AG04450 (cell line): ENCODE measurements at regions of chr14 and their contacts with region 1.

Region 1: DNA sequence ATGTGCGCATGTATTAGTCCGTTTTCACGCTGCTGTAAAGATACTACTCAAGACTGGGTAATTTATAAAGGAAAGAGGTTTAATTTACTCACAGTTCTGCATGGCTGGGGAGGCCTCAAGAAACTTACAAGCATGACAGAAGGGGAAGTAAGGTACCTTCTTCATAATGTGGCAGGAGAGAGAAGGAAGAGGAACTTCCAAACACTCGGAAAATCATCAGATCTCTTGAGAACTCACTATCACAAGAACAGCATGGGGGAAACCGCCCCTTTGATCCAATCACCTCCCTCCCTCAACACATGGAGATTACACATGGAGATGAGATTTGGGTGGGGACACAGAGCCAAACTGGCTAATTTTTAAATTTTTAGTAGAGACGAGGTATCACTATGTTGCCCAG is 41.8 kb upstream of the SNX6 start:
- DNase-seq: no peak
- H3K4me3 ChIP-seq: no peak overlapping the region
- H3K27ac ChIP-seq: no peak overlapping the region
- H3K27me3 ChIP-seq: no peaks in the 10 kb centered on the region
- CTCF ChIP-seq: no peak

Region 2: GRCh38 chr14:34482468-34482867 is 189.2 kb before region 1 on chr14:
- CTCF ChIA-PET with region 1: no interaction called
- POLR2A ChIA-PET with region 1: no interaction called
- DNase-seq: no peak
- H3K4me3 ChIP-seq: no peak overlapping the region
- H3K27ac ChIP-seq: no peak overlapping the region
- H3K27me3 ChIP-seq: no peaks in the 10 kb centered on the region
- CTCF ChIP-seq: no peak

Region 3: GRCh38 chr14:34568803-34569202 is 102.9 kb before region 1 on chr14:
- CTCF ChIA-PET with region 1: no interaction called
- POLR2A ChIA-PET with region 1: no interaction called
- DNase-seq: no peak
- H3K4me3 ChIP-seq: no peak overlapping the region
- H3K27ac ChIP-seq: no peak overlapping the region
- H3K27me3 ChIP-seq: no peaks in the 10 kb centered on the region
- CTCF ChIP-seq: no peak

Region 4: DNA sequence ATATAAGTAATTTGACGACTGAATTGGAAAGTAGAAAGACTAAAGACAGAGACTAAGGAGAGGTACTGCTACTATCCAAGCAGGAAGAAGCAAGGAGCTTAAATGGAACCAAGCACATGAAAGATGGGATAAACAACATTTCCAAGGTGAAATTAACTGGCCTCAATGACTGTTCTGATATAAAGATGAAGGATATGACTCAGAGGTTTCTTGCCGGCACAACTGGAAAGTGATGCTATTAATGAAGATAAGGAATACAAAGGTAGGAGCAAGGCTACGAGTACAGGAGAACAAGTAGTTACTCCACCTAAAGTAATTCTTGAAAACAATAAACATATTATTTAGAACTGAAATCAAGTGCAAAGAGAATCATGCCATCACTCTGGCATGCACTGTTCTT is 48.2 kb before region 1 on chr14:
- CTCF ChIA-PET with region 1: no interaction called
- POLR2A ChIA-PET with region 1: no interaction called
- DNase-seq: no peak
- H3K4me3 ChIP-seq: no peak overlapping the region
- H3K27ac ChIP-seq: no peak overlapping the region
- H3K27me3 ChIP-seq: no peaks in the 10 kb centered on the region
- CTCF ChIP-seq: no peak

Region 5: DNA sequence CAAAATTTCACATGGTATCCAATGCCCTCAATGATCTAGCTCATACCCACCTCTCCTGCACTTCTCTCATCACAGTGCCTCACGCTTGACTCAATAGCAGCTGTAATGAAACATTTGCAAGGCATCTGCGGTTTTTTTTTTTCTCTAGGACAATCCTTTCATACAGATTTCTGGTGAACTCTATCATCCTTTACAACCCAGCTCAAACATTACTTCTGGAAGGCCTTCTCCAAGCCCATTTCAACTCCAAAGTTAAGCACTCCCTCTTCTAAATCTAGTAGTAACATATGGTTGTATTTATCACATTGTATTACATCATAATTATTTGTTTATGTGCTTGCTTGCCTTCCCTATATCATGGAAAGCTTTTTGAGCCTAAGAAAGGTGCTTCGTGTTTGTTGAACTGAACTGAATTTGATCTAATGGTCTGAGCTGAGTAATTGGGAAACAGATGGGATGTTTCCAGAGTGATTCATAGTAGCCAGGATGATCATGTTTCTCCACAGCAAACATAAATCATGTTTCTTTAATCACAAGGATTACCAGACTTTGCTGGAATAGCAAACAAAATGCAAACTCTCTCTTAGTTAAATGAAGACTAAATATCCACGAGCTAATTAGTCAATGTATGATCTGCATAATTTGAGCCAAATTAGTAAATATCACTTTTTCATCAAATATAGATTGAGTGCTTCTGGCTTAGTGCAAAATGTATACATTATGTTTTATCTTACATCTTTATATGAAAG is 28.3 kb after region 1 on chr14:
- CTCF ChIA-PET with region 1: interaction called, 17 read pairs
- POLR2A ChIA-PET with region 1: no interaction called
- DNase-seq: peak; percentile 81
- H3K4me3 ChIP-seq: no peak overlapping the region
- H3K27ac ChIP-seq: peak overlapping the region; percentile 25
- H3K27me3 ChIP-seq: no peaks in the 10 kb centered on the region
- CTCF ChIP-seq: no peak

Region 6: GRCh38 chr14:34714320-34715126 is 42.8 kb after region 1 on chr14 and contains the start of gene CFL2:
- CTCF ChIA-PET with region 1: interaction called, 18 read pairs
- POLR2A ChIA-PET with region 1: no interaction called
- DNase-seq: no peak
- H3K4me3 ChIP-seq: peak within 1 kb of the TSS; percentile 75
- H3K27ac ChIP-seq: peak within 1 kb of the TSS; percentile 94
- H3K27me3 ChIP-seq: no peaks in the 10 kb centered on the region
- CTCF ChIP-seq: no peak
- polyA plus RNA-seq, gene CFL2: 163 and 229 TPM in 2 replicates

Region 7: GRCh38 chr14:34733235-34733634 is 61.5 kb after region 1 on chr14:
- CTCF ChIA-PET with region 1: interaction called, 10 read pairs
- POLR2A ChIA-PET with region 1: no interaction called
- DNase-seq: no peak
- H3K4me3 ChIP-seq: no peak overlapping the region
- H3K27ac ChIP-seq: no peak overlapping the region
- H3K27me3 ChIP-seq: no peaks in the 10 kb centered on the region
- CTCF ChIP-seq: no peak

Region 8: DNA sequence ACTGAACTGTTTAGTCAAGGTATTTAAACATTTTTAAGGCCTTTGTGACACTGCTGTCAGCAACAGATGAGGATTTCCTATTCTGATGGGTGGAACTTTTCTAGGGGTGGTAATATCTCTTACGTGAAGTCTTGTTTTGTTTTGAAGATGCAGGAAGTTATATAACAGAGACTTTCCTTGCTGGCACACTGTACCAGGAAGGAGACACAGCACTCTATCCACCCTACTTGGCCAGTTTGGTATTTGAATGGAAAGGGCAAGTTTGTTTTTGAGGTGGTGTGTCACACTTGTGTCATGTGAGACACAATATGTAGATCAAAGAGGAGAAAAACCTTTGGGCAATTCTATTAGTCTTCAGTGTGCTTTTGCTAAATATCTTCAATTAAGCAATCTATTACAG is 259.5 kb after region 1 on chr14:
- CTCF ChIA-PET with region 1: no interaction called
- POLR2A ChIA-PET with region 1: no interaction called
- DNase-seq: no peak
- H3K4me3 ChIP-seq: no peak overlapping the region
- H3K27ac ChIP-seq: no peak overlapping the region
- H3K27me3 ChIP-seq: no peaks in the 10 kb centered on the region
- CTCF ChIP-seq: no peak